ENCODE measurements at regions of chr7 and their contacts with region 1.

Region 1: GRCh38 chr7:100852048-100852872 is at the start of gene SLC12A9:
- DNase-seq: peak; percentile 85
- H3K4me3 Mint-ChIP-seq: peak within 1 kb of the TSS; percentile 93
- H3K27ac Mint-ChIP-seq: peak within 1 kb of the TSS; percentile 61
- H3K4me1 Mint-ChIP-seq: peaks cover 3% of the 10 kb centered on the region
- H3K27me3 Mint-ChIP-seq: no peaks in the 10 kb centered on the region
- total RNA-seq, gene SLC12A9: 27.3 and 31.6 TPM in 2 replicates

Region 2: DNA sequence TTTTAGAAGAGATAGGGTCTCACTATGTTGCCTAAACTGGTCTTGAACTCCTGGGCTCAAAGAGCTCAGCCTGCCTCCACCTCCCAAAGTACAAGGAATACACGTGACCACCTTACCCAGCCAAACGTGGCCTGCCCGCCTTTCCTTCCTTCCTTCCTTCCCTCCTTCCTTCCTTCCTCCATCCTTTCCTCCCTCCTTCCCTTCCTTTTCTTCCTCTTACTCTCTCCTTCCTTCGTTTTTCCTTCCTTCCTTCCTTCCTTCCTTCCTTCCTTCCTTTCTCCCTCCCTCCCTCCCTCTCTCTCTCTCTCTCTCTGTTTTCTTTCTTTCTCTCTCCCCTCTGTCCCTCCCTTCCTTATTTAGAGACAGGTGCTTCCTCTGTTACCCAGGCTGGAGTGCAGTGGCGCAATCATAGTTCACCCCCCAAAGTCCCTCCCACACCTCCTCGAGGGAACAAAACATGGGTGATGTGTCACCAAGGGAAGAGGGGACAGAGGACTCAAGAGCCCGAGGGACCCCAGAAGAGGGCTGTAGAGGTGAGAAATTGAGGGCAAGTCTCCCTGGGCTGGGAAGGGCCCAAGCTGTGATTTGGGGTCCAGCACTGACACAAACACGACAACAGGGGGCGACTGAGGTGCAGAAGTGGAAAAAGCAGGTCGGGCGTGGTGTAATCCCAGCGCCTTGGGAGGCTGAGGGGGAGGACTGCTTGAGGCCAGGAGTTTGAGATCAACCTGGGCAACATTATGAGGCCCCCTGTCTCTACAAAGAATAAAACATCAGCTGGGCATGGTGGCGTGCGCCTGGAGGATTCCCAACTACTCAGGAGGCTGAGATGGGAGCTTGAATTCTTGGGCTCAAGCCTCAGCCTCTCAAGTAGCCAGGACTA is 53.0 kb before region 1 on chr7:
- intact Hi-C with region 1: loop called (anchors 1 kb)
- DNase-seq: peak; percentile 38
- H3K4me3 Mint-ChIP-seq: no peak overlapping the region
- H3K27ac Mint-ChIP-seq: no peak overlapping the region
- H3K4me1 Mint-ChIP-seq: peaks cover 6% of the 10 kb centered on the region
- H3K27me3 Mint-ChIP-seq: peaks cover 3% of the 10 kb centered on the region

Region 3: GRCh38 chr7:100874577-100875355 is 22.5 kb after region 1 on chr7 and contains the start of gene SRRT:
- intact Hi-C with region 1: loop called (anchors 1 kb)
- DNase-seq: peak; percentile 98
- H3K4me3 Mint-ChIP-seq: peak within 1 kb of the TSS; percentile 96
- H3K27ac Mint-ChIP-seq: peak within 1 kb of the TSS; percentile 94
- H3K4me1 Mint-ChIP-seq: peaks cover 28% of the 10 kb centered on the region
- H3K27me3 Mint-ChIP-seq: no peaks in the 10 kb centered on the region
- total RNA-seq, gene SRRT: 280 and 290 TPM in 2 replicates

Region 4: GRCh38 chr7:101153969-101154692 is 301.9 kb after region 1 on chr7 and contains the start of gene AP1S1:
- intact Hi-C with region 1: no loop called
- DNase-seq: peak; percentile 92
- H3K4me3 Mint-ChIP-seq: peak within 1 kb of the TSS; percentile 83
- H3K27ac Mint-ChIP-seq: peak within 1 kb of the TSS; percentile 74
- H3K4me1 Mint-ChIP-seq: peaks cover 13% of the 10 kb centered on the region
- H3K27me3 Mint-ChIP-seq: peaks cover 15% of the 10 kb centered on the region
- total RNA-seq, gene AP1S1: 41.8 and 42.8 TPM in 2 replicates

Region 5: GRCh38 chr7:101244375-101245146 is 392.3 kb after region 1 on chr7 and contains the start of gene FIS1:
- intact Hi-C with region 1: no loop called
- DNase-seq: peak; percentile 91
- H3K4me3 Mint-ChIP-seq: peak within 1 kb of the TSS; percentile 92
- H3K27ac Mint-ChIP-seq: peak within 1 kb of the TSS; percentile 94
- H3K4me1 Mint-ChIP-seq: peaks cover 18% of the 10 kb centered on the region
- H3K27me3 Mint-ChIP-seq: no peaks in the 10 kb centered on the region
- total RNA-seq, gene FIS1: 121 and 132 TPM in 2 replicates